ENCODE measurements at regions of chr7 and their contacts with region 1.

Region 1: GRCh38 chr7:30750683-30751650 is 968 bp upstream of the INMT start:
- DNase-seq: peak; percentile 82 to 90 (median 89)
- ATAC-seq: peak; percentile 60 to 82 (median 81)
- H3K4me3 ChIP-seq: peak overlapping the region in 9 of 12 donors; percentile 43 to 69 (median 51)
- H3K27ac ChIP-seq: peak overlapping the region; percentile 67 to 91 (median 82)
- H3K4me1 ChIP-seq: peaks cover 0 to 64% (median 39%) of the 10 kb centered on the region in 12 donors
- H3K27me3 ChIP-seq: no peaks in the 10 kb centered on the region
- CTCF ChIP-seq: no peak
- POLR2A ChIP-seq: no peak

Region 2: DNA sequence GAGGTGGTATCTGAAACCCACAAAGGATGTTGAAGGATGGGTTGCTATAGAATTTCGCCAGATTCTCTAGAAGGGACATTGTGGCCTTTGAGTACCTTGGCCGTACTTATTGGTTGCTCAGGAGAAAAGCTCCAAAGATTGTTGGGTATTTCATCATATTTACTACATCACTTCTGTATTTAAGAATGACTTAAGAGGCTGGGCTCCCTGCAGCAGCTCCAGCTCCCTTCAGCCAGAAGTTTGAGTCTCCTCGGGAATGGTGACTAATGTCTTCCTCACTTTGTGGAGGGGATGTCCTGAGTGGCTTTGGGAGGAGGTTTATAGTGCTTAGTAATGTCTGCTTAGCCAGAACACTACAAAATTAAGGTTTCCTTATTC is 38.4 kb after region 1 on chr7:
- intact Hi-C with region 1: loop called in 1 of 10 experiments (anchors 5 kb)
- DNase-seq: peak in 1 of 5 donors; percentile 56
- ATAC-seq: peak; percentile 62 to 96 (median 86)
- H3K4me3 ChIP-seq: no peak overlapping the region
- H3K27ac ChIP-seq: peak overlapping the region in 4 of 12 donors; percentile 25 to 59 (median 42)
- H3K4me1 ChIP-seq: peaks cover 0 to 15% (median 0%) of the 10 kb centered on the region in 12 donors
- H3K27me3 ChIP-seq: no peaks in the 10 kb centered on the region
- CTCF ChIP-seq: no peak
- POLR2A ChIP-seq: no peak

Measured in heart left ventricle (tissue), 16 donors.